Ascending aorta (tissue), 2 donors: ENCODE measurements at regions of chr13 and their contacts with region 1.

Region 1: GRCh38 chr13:78137404-78138142 is 218.9 kb upstream of the EDNRB start:
- DNase-seq: no peak
- H3K4me3 ChIP-seq: no peak overlapping the region
- H3K27ac ChIP-seq: no peak overlapping the region
- H3K4me1 ChIP-seq: no peaks in the 10 kb centered on the region
- H3K27me3 ChIP-seq: no peaks in the 10 kb centered on the region
- CTCF ChIP-seq: peak in 2 of 3 experiments; percentile 53 to 55

Region 2: DNA sequence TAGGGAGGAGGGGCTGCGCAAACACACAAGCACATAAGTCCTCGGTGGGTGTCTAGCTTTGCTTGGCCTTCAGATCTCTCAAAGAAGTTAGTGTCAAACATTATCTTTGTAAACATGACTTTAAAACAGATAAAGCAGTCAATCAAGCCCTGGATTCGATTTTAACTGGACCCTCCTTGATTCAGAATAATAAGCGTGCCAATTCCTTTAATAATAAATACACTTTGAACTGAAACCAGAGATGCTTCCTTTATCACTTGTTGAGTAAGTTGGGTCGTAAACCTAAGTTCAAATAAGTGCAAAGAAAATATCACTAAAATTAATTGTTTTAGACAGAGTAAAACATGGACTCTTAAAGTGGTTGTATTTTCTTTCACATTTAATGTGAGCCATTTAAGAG is 434.9 kb after region 1 on chr13:
- intact Hi-C with region 1: no loop called
- DNase-seq: no peak
- H3K4me3 ChIP-seq: no peak overlapping the region
- H3K27ac ChIP-seq: no peak overlapping the region
- H3K4me1 ChIP-seq: no peaks in the 10 kb centered on the region
- H3K27me3 ChIP-seq: no peaks in the 10 kb centered on the region
- CTCF ChIP-seq: no peak

Region 3: DNA sequence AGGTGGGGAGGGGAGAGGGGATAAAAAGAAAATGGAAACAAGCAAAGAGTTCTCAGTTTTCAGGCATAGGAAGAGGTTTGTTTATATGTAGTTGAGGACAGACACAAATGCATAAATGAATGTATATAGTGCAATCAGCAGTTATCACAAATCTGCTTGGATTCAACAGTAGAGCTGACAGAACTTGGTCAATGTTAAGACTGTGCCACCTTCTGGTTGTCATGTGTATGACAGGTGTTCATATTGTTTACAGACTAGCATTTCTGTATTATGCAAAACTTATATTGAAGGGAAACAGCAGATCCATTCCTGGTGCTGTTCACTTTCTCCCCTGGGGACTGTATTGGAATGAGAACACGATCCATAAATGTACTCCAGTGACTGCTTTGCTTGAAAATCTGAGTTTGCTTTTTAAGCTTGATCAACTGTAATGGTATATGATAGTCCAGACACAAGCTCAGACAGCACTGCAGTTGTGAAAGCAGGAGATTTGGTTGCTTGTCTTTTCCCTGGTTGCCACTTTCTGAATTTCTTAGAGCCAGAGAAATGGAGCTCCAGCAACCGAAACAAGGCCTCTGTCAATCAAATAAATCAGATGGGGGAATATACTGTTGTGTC is 840.9 kb after region 1 on chr13:
- intact Hi-C with region 1: loop called (anchors 5 kb)
- DNase-seq: no peak
- H3K4me3 ChIP-seq: no peak overlapping the region
- H3K27ac ChIP-seq: no peak overlapping the region
- H3K4me1 ChIP-seq: no peaks in the 10 kb centered on the region
- H3K27me3 ChIP-seq: no peaks in the 10 kb centered on the region
- CTCF ChIP-seq: peak; percentile 15 to 44 (median 42)